ENCODE measurements at regions of chr2 and their contacts with region 1.

Region 1: DNA sequence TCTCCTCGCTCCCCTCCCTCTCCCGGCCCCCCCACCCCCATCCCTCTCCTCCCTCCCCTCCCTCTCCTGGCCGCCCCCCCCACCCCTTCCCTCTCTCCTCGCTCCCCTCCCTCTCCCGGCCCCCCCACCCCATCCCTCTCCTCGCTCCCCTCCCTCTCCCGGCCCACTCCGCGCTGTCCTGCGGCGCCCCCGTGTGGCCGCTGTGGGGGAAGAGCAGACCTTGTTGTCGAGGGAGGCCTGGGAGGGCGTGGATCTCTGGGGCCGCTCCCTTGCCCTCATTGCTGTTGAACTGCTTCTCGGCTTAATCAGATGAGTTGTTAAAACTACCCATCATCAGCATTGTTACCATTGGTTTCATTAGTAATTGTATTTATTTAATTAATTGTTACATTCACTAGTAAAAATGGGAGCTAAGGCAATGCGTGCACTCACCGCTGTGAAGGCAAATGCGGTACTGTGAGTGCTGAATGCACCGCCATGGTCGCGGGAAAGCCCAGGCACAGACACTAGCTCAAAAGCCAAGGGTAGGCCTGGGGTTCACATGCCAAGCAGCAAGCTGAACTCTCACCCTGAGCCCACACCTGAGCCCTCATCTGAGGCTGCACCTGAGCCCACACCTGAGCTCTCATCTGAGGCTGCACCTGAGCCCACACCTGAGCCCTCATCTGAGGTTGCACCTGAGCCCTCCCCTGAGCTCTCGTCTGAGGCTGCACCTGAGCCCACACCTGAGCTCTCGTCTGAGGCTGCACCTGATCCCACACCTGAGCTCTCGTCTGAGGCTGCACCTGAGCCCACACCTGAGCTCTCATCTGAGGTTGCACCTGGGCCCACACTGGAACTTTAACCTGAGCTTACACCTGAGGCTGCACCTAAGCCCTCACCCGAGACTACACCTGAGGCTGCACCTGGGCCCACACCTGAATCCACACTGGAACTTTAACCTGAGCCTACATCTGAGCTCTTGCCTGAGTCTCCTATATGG is 8.8 kb downstream of the RTP5 start:
- H3K4me3 ChIP-seq: no peak overlapping the region
- H3K27ac ChIP-seq: no peak overlapping the region
- H3K4me1 ChIP-seq: peaks cover 6% of the 10 kb centered on the region; the same call in 1 of the 2 replicates
- CTCF ChIP-seq: 0 out of 2 replicates have a peak, but pooled peaks have one; percentile 41

Region 2: GRCh38 chr2:241665727-241666440 is 212.4 kb before region 1 on chr2:
- CTCF ChIA-PET with region 1: interaction called, 15 read pairs
- POLR2A ChIA-PET with region 1: no interaction called
- H3K4me3 ChIP-seq: no peak overlapping the region
- H3K27ac ChIP-seq: no peak overlapping the region
- H3K4me1 ChIP-seq: no peaks in the 10 kb centered on the region; the same call in 1 of the 2 replicates
- CTCF ChIP-seq: no peak

Region 3: DNA sequence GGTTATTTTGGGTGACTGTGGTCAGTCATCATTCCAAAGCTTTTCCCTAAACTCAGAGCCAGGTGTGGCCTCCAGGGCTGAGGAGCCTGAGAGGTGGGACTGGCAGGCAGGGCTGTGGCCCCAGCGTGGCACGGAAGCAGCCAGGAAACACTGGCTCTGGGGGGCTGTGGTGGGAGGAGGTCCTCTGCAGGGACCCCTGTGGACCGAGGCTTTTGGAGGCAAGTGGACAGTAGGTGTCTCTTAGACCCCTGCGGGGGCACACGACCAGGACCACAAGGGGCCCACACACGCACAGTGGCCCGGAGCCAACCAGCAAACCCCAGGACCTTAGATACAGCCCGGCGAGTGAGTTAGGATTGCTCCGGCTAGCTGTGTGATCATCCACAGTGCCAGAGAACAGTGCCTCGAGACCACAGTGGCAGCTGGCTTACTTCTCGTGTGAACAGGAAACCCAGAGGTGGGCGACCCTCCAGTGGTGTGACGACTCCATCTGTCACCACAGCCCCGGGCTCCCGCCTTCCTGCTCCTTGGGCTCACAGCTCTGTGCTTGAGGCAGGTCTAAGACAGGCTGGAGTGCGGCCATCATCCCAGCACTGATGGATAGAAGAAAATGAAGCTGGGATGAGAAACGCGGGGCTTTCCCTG is 10.4 kb before region 1 on chr2:
- CTCF ChIA-PET with region 1: interaction called, 19 read pairs
- POLR2A ChIA-PET with region 1: no interaction called
- H3K4me3 ChIP-seq: no peak overlapping the region
- H3K27ac ChIP-seq: no peak overlapping the region
- H3K4me1 ChIP-seq: no peaks in the 10 kb centered on the region
- CTCF ChIP-seq: no peak

Region 4: DNA sequence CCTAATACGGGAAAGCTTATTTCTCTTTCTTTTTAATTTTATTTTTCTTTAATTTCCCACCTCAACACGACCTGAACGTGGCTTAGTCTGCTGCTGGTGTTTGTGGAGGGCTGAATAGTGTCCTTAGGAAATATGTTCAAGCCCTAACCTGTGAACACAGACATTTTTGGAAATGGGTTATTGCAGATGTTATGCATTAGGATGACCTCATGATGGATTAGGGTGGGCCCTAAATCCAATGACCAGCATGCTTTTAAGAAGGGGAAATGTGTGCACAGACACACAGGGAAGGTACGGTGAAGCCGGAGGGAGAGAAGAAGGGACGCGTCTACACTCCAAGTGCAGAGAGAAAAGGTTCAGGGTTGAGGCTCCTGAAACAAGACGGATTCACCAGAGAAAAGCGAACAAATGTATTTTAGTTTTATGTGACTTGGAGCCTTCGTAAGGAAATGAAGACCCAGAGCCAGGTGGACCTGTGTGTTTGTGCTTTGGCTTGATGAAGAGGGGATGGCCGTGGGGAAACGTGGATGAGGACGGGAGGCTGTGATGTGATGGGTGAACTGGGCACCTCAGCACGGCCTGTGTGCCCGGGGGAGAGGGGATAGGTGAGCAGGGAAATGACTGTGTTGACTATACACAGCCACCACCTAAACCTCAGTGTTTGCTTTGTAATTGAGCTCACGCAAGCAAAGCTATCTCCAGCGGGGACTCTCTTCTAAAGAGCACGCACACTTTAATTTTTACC is 28.7 kb after region 1 on chr2:
- CTCF ChIA-PET with region 1: no interaction called
- POLR2A ChIA-PET with region 1: no interaction called
- H3K4me3 ChIP-seq: no peak overlapping the region
- H3K27ac ChIP-seq: no peak overlapping the region
- H3K4me1 ChIP-seq: no peaks in the 10 kb centered on the region
- CTCF ChIP-seq: no peak

Measured in HEK293 (cell line).